ENCODE measurements at regions of chr10 and their contacts with region 1.

Region 1: GRCh38 chr10:26821699-26822570 is 38.8 kb downstream of the ABI1 start:
- DNase-seq: no peak
- H3K4me3 ChIP-seq: no peak overlapping the region
- H3K27ac ChIP-seq: no peak overlapping the region
- H3K4me1 ChIP-seq: no peaks in the 10 kb centered on the region
- H3K27me3 ChIP-seq: no peaks in the 10 kb centered on the region
- CTCF ChIP-seq: no peak

Region 2: DNA sequence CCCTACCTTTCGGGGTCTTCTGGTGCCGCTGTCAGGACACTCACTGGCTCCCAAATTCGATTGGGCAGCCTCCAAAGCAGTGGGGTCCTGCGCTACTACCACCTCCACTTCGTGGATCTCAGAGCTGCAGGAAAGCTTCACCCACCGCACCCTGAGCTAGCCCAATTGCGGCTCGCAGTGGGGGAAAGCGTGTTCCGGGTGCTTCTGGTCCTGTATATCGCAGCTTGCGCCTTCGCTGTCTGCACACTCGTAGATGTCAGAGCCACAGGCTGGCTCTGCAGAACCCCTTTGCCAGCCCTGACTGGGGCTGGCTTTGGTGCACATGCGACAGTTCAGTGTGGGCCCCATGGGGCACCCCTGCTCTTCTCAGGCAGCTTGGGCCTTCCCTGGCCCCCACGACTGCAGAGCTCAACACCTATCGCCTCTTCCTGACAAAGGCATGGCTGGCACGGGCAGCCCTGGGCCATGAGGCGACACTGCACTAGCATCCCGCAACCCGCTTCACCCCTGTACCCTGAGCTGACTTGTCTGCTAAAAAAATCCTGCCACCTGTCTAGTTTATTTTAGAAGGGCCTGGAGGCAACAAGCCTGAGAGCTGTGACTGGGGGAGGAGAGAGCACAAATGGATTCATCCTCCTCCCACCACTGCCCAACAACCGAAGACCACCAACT is 117.5 kb after region 1 on chr10:
- CTCF ChIA-PET with region 1: no interaction called
- POLR2A ChIA-PET with region 1: interaction called, 12 read pairs
- intact Hi-C with region 1: no loop called
- DNase-seq: no peak
- H3K4me3 ChIP-seq: no peak overlapping the region
- H3K27ac ChIP-seq: no peak overlapping the region
- H3K4me1 ChIP-seq: no peaks in the 10 kb centered on the region
- H3K27me3 ChIP-seq: no peaks in the 10 kb centered on the region
- CTCF ChIP-seq: no peak

Region 3: DNA sequence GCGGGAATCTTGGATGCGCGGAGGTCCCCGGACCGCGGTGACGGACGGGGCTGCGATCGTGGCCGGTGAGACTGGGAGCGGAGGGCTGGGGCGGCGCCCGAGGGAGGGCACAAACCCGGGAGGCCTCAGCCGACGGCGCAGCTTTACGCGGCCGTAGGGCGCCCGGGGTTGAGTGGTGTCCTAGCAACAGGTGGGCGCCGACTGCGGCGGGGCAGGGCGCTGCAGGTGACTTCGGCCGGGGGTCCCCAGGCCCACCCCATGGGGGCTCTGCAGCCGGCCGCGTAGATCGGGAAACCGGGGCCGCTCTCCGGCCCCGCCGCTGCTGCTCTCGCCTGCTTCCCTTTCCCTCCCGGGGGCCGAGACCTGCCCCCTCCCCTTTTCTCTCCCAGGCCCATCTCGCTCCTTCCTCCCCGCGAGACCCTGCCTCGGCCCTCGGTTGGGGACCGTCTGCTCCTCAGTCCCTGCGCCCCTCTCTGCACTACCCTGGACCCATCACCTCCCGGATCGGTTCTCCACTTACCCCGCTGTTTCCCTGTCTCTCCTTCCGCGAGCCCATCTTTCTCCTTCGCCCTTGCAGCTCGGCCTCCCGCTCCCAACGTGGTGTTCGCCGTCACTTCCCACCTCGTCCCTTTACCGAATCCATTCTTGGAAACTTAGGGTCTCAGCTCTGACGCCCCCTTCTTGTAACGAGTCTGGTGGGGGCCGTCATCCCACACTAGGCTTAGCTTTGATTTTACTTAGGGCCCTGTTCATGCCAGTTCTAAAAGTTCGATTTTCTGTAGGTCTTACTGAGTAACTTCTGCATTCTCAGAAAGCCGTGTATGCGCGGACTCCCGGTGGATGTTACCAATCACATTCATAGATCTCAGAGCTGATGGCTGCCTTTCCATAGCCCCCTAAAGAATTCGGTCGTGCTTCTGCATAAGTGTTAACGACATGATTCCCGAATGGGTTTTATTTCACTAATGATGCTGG is 437.2 kb after region 1 on chr10:
- CTCF ChIA-PET with region 1: no interaction called
- POLR2A ChIA-PET with region 1: no interaction called
- intact Hi-C with region 1: no loop called
- DNase-seq: peak; percentile 10
- H3K4me3 ChIP-seq: peak overlapping the region; percentile 38
- H3K27ac ChIP-seq: no peak overlapping the region
- H3K4me1 ChIP-seq: no peaks in the 10 kb centered on the region
- H3K27me3 ChIP-seq: peaks cover 61% of the 10 kb centered on the region
- CTCF ChIP-seq: no peak

Measured in A673 (cell line).